HepG2 (cell line): ENCODE measurements at regions of chr13 and their contacts with region 1.

Region 1: DNA sequence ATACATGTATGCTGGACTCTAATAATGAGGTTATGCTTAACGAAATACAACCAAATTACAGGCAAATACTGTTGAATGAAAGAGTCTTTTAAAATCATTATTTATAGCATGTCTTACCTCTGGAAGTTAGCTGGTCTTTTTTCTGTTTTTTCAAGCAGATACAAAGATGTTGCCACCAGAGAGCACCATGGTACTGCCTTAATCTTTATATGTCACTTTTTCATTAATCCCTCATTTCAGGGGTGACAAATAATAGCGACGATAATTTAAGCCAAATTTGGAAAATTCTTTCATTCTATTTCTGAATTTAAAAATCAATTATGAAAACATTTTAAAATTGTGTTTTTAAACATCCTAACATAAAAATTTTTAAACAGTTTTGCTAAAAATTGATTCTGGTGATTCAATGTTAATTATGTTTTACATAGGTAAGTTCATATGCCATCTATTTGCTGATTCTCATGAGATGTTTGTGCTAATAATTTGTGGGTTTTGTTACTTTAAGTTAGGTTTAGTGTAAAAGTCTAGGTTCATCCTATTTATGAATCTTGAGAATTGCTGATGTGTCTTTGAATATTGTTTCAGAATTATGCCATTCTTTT is 379.3 kb upstream of the SGCG start:
- DNase-seq: peak; percentile 23
- ATAC-seq: no peak
- H3K4me3 ChIP-seq: no peak overlapping the region
- H3K27ac ChIP-seq: no peak overlapping the region
- H3K4me1 ChIP-seq: no peaks in the 10 kb centered on the region
- H3K27me3 ChIP-seq: no peaks in the 10 kb centered on the region; a peak in 1 of 5 replicates
- CTCF ChIP-seq: peak; percentile 47
- EP300 ChIP-seq: no peak
- POLR2A ChIP-seq: no peak
- RAD21 ChIP-seq: no peak

Region 2: GRCh38 chr13:20997430-20998161 is 1803.9 kb before region 1 on chr13:
- CTCF ChIA-PET with region 1: no interaction called
- POLR2A ChIA-PET with region 1: no interaction called
- in situ Hi-C with region 1: no loop called
- intact Hi-C with region 1: no loop called
- DNase-seq: no peak
- ATAC-seq: no peak
- H3K4me3 ChIP-seq: no peak overlapping the region
- H3K27ac ChIP-seq: no peak overlapping the region
- H3K4me1 ChIP-seq: no peaks in the 10 kb centered on the region
- H3K27me3 ChIP-seq: no peaks in the 10 kb centered on the region
- CTCF ChIP-seq: no peak
- EP300 ChIP-seq: no peak
- POLR2A ChIP-seq: no peak
- RAD21 ChIP-seq: no peak

Region 3: DNA sequence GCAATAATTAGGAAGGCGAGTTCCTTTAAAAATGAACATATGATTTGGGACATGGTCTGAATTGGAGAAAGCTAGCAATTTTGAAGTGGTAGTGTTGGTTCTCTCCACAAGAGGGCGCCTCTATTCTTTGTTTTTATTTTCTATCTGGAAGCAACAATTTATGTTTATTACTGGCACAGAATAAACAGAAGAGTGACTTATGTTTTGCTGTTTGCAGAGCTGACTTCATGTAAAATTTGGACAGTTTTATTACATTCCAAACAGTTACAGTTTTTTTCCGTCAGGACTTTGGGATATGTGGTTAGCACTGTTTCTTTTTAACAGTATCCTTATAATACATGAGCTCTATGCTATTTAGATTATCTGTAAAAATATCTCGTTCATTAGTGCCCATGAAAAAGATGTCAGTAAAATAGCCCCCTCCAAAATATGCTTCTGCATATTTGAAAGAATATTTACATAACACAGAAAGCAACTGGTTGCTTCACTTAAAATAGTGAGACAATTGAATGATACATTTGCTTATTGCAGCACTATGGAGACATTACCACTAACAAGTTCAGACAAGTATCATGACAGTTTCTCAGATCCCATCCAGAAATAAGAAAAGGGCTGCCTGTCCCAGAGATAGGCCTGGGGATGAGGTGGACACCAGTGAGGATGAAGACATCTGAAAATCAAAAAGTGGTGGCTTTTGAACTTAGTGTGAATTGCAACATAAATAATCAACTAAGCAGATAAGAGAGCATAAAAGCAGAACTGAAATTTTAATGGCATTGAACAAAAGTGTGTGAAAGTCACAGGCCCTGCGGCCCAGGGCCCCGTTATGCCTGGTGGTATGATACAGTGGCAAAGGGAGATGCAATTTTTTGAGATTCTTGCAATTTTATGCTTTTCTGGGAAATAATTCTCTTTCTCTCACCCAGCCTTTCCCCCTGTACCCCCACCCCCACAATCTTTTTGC is 1162.9 kb before region 1 on chr13:
- CTCF ChIA-PET with region 1: interaction called, 3 read pairs
- POLR2A ChIA-PET with region 1: no interaction called
- in situ Hi-C with region 1: no loop called
- intact Hi-C with region 1: loop called (anchors 2 kb)
- DNase-seq: no peak
- ATAC-seq: peak; percentile 38; the same call in 1 of the 3 replicates
- H3K4me3 ChIP-seq: no peak overlapping the region
- H3K27ac ChIP-seq: no peak overlapping the region
- H3K4me1 ChIP-seq: peaks cover 21% of the 10 kb centered on the region
- H3K27me3 ChIP-seq: no peaks in the 10 kb centered on the region
- CTCF ChIP-seq: peak; percentile 65
- EP300 ChIP-seq: no peak
- POLR2A ChIP-seq: no peak
- RAD21 ChIP-seq: no peak

Region 4: GRCh38 chr13:23020223-23020843 is 218.8 kb after region 1 on chr13:
- CTCF ChIA-PET with region 1: interaction called, 11 read pairs
- POLR2A ChIA-PET with region 1: no interaction called
- in situ Hi-C with region 1: loop called (anchors 10 kb)
- intact Hi-C with region 1: loop called (anchors 1 kb)
- DNase-seq: peak; percentile 53
- ATAC-seq: peak; percentile 93
- H3K4me3 ChIP-seq: no peak overlapping the region
- H3K27ac ChIP-seq: no peak overlapping the region
- H3K4me1 ChIP-seq: no peaks in the 10 kb centered on the region
- H3K27me3 ChIP-seq: no peaks in the 10 kb centered on the region
- CTCF ChIP-seq: peak; percentile 74
- EP300 ChIP-seq: no peak
- POLR2A ChIP-seq: no peak
- RAD21 ChIP-seq: 0 out of 2 replicates have a peak, but pooled peaks have one; percentile 13

Region 5: GRCh38 chr13:23321535-23322241 is 520.2 kb after region 1 on chr13:
- CTCF ChIA-PET with region 1: no interaction called
- POLR2A ChIA-PET with region 1: no interaction called
- in situ Hi-C with region 1: loop called (anchors 25 kb)
- intact Hi-C with region 1: loop called (anchors 5 kb)
- DNase-seq: peak; percentile 11
- ATAC-seq: peak; percentile 84
- H3K4me3 ChIP-seq: no peak overlapping the region
- H3K27ac ChIP-seq: no peak overlapping the region
- H3K4me1 ChIP-seq: 0 out of 2 replicates have a peak, but pooled peaks cover 7% of the 10 kb centered on the region
- H3K27me3 ChIP-seq: no peaks in the 10 kb centered on the region; a peak in 1 of 5 replicates
- CTCF ChIP-seq: no peak
- EP300 ChIP-seq: no peak
- POLR2A ChIP-seq: no peak
- RAD21 ChIP-seq: no peak